ENCODE measurements at regions of chr5 and their contacts with region 1.

Region 1: DNA sequence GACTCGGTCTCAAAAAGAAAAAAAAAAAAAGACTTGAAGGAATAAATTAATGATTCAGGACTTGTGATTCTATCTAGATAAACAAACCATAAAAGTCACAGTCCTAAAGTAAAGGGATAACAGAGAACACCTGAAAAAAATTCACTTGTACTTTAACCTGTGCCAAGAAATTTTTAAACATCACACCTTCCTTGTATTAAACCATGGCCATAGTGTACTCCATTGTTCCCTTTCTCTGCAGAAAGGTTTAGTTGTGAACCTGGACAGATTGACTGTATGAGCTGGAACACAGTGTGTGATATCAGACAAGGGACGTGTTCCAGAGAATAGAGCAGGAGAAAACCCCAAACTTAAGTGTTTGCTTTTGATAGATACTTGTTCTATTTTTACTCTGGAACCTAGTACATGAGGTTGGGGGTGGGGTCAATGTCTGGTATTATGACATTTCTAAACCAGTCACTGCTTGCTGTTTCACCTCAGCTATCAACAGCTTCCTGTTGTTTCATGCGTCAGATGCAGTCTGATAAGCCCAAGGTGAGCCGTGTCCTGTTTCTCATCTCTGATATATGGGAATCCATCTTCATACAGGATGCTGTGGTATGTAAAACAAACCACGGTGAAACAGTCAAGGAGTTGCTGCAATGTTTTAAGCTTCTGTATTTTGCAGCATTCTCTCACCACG is 62.5 kb upstream of the ITGA1 start:
- DNase-seq: peak; percentile 45 to 92 (median 67)
- ATAC-seq: peak; percentile 95
- H3K4me3 ChIP-seq: no peak overlapping the region
- H3K4me3 Mint-ChIP-seq: peak overlapping the region; percentile 68
- H3K27ac ChIP-seq: peak overlapping the region; percentile 44 to 67
- H3K27ac Mint-ChIP-seq: peak overlapping the region; percentile 95
- H3K4me1 ChIP-seq: peaks cover 35% of the 10 kb centered on the region
- H3K4me1 Mint-ChIP-seq: peaks cover 71% of the 10 kb centered on the region
- H3K27me3 ChIP-seq: no peaks in the 10 kb centered on the region
- H3K27me3 Mint-ChIP-seq: no peaks in the 10 kb centered on the region
- CTCF ChIP-seq: no peak

Region 2: DNA sequence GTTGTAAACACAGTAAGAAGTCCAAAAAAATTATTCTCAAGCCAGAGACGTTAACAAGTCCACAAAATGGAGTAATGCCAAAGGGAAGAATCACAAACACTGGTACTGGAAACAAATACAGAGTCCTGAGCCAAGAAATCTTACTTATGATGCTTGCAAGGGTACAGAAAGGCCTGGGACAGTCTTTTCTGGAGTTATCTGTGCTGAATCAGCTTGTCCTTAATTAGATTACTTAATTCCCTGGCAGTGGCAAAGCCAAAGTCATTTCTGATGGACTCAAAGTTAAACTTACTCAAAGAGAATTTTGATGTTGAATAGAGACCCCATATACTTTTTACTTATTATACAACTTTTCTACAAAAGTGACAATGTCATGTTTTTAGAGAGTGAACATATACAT is 548.0 kb before region 1 on chr5:
- CTCF ChIA-PET with region 1: no interaction called
- POLR2A ChIA-PET with region 1: no interaction called
- intact Hi-C with region 1: no loop called
- DNase-seq: no peak
- ATAC-seq: no peak
- H3K4me3 ChIP-seq: no peak overlapping the region
- H3K4me3 Mint-ChIP-seq: no peak overlapping the region
- H3K27ac ChIP-seq: no peak overlapping the region
- H3K27ac Mint-ChIP-seq: no peak overlapping the region
- H3K4me1 ChIP-seq: no peaks in the 10 kb centered on the region
- H3K4me1 Mint-ChIP-seq: no peaks in the 10 kb centered on the region
- H3K27me3 ChIP-seq: no peaks in the 10 kb centered on the region
- H3K27me3 Mint-ChIP-seq: no peaks in the 10 kb centered on the region
- CTCF ChIP-seq: no peak

Region 3: GRCh38 chr5:52709171-52709925 is 15.9 kb before region 1 on chr5:
- CTCF ChIA-PET with region 1: no interaction called
- POLR2A ChIA-PET with region 1: interaction called, 6 read pairs
- intact Hi-C with region 1: loop called in 1 of 2 experiments (anchors 2 kb)
- DNase-seq: peak in 3 of 9 experiments; percentile 15 to 27 (median 15)
- ATAC-seq: peak; percentile 23
- H3K4me3 ChIP-seq: no peak overlapping the region
- H3K4me3 Mint-ChIP-seq: peak overlapping the region; percentile 16
- H3K27ac ChIP-seq: no peak overlapping the region
- H3K27ac Mint-ChIP-seq: peak overlapping the region; percentile 34
- H3K4me1 ChIP-seq: peaks cover 28% of the 10 kb centered on the region
- H3K4me1 Mint-ChIP-seq: peaks cover 62% of the 10 kb centered on the region
- H3K27me3 ChIP-seq: no peaks in the 10 kb centered on the region
- H3K27me3 Mint-ChIP-seq: no peaks in the 10 kb centered on the region
- CTCF ChIP-seq: no peak

Region 4: DNA sequence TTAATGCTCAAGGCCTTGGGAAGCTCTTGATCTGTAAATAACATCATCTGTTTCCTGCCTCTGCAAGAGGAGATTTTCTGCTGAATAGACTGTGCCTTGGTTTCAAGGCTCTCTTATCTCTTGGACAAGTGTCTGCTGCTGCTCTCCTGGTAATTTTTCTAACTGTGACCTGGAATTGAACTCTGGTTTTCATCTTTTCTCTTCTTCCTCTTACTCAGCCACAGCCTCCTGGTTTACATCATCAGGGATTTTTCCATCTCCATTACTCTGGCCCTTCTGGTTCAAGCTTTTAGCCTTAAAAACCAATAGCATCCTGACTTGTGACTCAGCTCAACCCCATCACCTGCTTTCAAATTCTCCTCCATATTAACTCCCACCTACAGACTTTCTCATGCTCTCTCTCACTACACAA is 12.9 kb after region 1 on chr5:
- CTCF ChIA-PET with region 1: interaction called, 6 read pairs
- POLR2A ChIA-PET with region 1: interaction called, 16 read pairs
- intact Hi-C with region 1: loop called (anchors 1 to 2 kb)
- DNase-seq: no peak
- ATAC-seq: no peak
- H3K4me3 ChIP-seq: no peak overlapping the region
- H3K4me3 Mint-ChIP-seq: peak overlapping the region; percentile 22
- H3K27ac ChIP-seq: no peak overlapping the region
- H3K27ac Mint-ChIP-seq: peak overlapping the region; percentile 81
- H3K4me1 ChIP-seq: peaks cover 30% of the 10 kb centered on the region
- H3K4me1 Mint-ChIP-seq: peaks cover 50% of the 10 kb centered on the region
- H3K27me3 ChIP-seq: no peaks in the 10 kb centered on the region
- H3K27me3 Mint-ChIP-seq: no peaks in the 10 kb centered on the region
- CTCF ChIP-seq: no peak

Region 5: DNA sequence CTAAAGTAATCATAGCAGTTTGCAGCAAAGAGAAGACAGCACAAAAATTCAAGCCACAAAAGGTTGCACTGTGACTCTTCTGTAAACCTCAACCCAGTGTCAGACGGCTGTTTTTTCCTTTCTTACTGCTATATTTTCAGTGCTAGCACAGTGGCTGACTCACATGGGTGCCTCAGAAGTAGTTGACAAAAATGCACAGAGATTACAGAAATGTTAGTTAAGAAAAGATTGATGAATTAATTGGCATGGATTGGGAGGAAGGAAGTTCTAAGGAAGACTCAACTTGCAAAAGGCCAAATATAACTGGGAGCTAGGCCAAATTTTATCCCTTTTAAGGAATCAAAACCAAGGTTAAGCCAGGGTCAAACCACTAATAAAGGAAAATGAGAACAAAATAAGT is 18.8 kb after region 1 on chr5:
- CTCF ChIA-PET with region 1: interaction called, 6 read pairs
- POLR2A ChIA-PET with region 1: interaction called, 16 read pairs
- intact Hi-C with region 1: loop called (anchors 1 to 2 kb)
- DNase-seq: peak in 8 of 9 experiments; percentile 22 to 74 (median 53)
- ATAC-seq: peak; percentile 91
- H3K4me3 ChIP-seq: no peak overlapping the region
- H3K4me3 Mint-ChIP-seq: peak overlapping the region; percentile 9
- H3K27ac ChIP-seq: peak overlapping the region in 1 of 2 experiments; percentile 21
- H3K27ac Mint-ChIP-seq: peak overlapping the region; percentile 90
- H3K4me1 ChIP-seq: peaks cover 43% of the 10 kb centered on the region
- H3K4me1 Mint-ChIP-seq: peaks cover 73% of the 10 kb centered on the region
- H3K27me3 ChIP-seq: no peaks in the 10 kb centered on the region
- H3K27me3 Mint-ChIP-seq: no peaks in the 10 kb centered on the region
- CTCF ChIP-seq: no peak

Region 6: DNA sequence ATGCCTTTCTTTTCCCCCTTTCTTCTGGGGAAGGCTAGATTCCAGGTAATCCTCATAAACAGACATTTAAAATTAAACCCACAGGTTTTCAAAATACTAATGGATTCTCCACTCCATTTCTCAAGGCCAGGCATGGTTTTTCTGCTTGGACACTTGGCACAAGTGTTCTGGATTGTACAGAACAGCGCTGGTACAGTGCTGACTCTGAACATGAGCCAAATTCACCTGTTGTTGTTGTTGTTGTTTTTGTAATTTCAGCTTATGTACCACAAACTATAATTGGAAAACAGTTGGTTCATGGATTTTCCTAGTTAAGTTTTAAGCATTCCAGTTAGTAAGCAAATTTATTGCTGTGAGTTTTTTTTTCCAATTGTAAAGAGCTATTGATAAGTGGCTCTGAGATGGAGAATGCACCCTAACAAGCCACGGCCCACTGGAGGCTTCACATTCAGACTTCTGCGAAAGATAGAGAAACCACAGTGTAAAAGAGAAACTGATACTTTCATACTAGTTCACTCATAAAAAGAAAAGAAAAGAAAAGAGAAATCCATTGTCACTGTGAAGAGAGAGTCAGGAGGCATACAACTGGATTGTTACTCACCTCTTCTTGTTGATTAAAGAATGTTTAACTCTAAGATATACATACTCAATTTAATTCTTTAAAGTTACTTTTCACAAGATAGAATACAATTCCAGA is 46.3 kb after region 1 on chr5:
- CTCF ChIA-PET with region 1: no interaction called
- POLR2A ChIA-PET with region 1: interaction called, 12 read pairs
- intact Hi-C with region 1: loop called in 1 of 2 experiments (anchors 5 kb)
- DNase-seq: peak in 5 of 9 experiments; percentile 6 to 57 (median 26)
- ATAC-seq: peak; percentile 45
- H3K4me3 ChIP-seq: no peak overlapping the region
- H3K4me3 Mint-ChIP-seq: peak overlapping the region; percentile 63
- H3K27ac ChIP-seq: no peak overlapping the region
- H3K27ac Mint-ChIP-seq: peak overlapping the region; percentile 87
- H3K4me1 ChIP-seq: peaks cover 24% of the 10 kb centered on the region
- H3K4me1 Mint-ChIP-seq: peaks cover 59% of the 10 kb centered on the region
- H3K27me3 ChIP-seq: no peaks in the 10 kb centered on the region
- H3K27me3 Mint-ChIP-seq: no peaks in the 10 kb centered on the region
- CTCF ChIP-seq: no peak

Region 7: DNA sequence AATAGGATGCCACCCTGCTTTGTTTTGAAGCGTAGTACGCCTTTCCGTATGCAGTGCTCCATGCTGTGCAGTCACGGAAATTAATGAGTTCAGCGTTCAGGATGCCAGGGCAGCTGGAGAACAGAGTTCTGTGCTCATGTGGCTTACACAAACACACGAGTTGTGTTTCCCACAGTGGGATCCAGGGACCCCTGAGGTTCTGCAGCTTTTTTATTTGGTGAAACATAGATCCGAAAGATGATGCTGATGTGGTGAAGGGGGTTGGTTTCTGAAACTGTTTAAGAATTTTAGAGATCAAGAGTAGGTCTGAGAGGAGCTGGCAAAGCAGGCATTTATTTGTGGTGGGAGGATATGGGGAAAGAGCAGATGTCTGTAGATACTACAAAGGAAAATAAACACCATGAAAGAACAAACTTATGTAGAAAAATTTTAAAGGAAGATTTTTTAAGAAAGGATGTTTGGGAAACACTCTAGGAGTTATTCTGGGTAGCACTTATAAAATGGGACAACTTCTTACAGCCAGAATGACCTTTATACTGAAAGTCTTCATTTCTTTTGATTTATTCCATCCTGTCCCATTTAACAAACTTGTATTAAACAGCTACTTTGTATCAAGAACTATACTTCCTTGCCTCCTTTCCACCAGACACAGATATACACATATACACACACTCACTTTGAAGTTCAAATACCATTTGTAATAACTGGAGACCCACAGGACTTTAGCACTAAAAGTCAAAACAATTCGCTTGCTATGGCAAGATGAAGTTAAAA is 115.3 kb after region 1 on chr5:
- CTCF ChIA-PET with region 1: no interaction called
- POLR2A ChIA-PET with region 1: no interaction called
- intact Hi-C with region 1: no loop called
- DNase-seq: no peak
- ATAC-seq: no peak
- H3K4me3 ChIP-seq: no peak overlapping the region
- H3K4me3 Mint-ChIP-seq: no peak overlapping the region
- H3K27ac ChIP-seq: no peak overlapping the region
- H3K27ac Mint-ChIP-seq: no peak overlapping the region
- H3K4me1 ChIP-seq: no peaks in the 10 kb centered on the region
- H3K4me1 Mint-ChIP-seq: peaks cover 14% of the 10 kb centered on the region
- H3K27me3 ChIP-seq: no peaks in the 10 kb centered on the region
- H3K27me3 Mint-ChIP-seq: no peaks in the 10 kb centered on the region
- CTCF ChIP-seq: no peak

Measured in CD8-positive, alpha-beta T cell (primary cell).